ENCODE measurements at regions of chr10 and their contacts with region 1.

Region 1: GRCh38 chr10:100518761-100519241 is 860 bp downstream of the SEC31B start:
- DNase-seq: peak in 1 of 2 donors; percentile 81
- H3K4me3 ChIP-seq: peak overlapping the region; percentile 48 to 73
- H3K27ac ChIP-seq: peak overlapping the region in 1 of 2 donors; percentile 13
- H3K4me1 ChIP-seq: no peaks in the 10 kb centered on the region
- H3K27me3 ChIP-seq: no peaks in the 10 kb centered on the region
- CTCF ChIP-seq: peak; percentile 36 to 73 (median 59)

Region 2: DNA sequence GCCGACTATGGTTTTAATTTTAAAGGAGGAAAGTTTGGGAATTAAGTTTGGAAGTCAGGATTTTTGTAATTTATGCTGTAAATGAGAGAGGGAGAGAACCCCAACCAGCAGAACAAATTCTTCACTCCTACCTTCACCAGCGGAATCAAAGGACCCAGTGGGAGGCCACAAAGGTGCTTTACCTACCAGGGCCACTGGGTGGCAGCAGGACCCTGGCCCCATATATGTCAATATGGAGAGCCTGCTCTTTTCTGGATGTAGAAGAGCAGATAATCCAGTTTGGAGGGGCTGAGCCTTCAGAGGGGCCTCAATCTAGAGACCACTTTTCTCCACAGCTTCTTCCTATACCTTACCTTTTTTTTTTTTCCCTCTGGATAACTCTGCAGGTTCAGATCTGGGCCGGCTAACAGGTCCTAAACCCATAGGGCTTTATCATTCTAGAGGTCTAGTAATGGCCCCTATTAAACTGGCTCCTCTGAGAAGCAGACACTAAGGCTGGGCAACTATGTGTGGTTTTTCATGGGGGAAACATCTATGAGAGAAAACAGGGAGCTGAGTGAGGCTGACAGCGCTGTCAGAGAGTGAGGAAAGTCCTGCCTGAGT is 180.3 kb before region 1 on chr10:
- intact Hi-C with region 1: loop called (anchors 2 kb)
- DNase-seq: peak; percentile 36 to 85
- H3K4me3 ChIP-seq: no peak overlapping the region
- H3K27ac ChIP-seq: no peak overlapping the region
- H3K4me1 ChIP-seq: no peaks in the 10 kb centered on the region
- H3K27me3 ChIP-seq: no peaks in the 10 kb centered on the region
- CTCF ChIP-seq: peak; percentile 87 to 91 (median 90)

Region 3: DNA sequence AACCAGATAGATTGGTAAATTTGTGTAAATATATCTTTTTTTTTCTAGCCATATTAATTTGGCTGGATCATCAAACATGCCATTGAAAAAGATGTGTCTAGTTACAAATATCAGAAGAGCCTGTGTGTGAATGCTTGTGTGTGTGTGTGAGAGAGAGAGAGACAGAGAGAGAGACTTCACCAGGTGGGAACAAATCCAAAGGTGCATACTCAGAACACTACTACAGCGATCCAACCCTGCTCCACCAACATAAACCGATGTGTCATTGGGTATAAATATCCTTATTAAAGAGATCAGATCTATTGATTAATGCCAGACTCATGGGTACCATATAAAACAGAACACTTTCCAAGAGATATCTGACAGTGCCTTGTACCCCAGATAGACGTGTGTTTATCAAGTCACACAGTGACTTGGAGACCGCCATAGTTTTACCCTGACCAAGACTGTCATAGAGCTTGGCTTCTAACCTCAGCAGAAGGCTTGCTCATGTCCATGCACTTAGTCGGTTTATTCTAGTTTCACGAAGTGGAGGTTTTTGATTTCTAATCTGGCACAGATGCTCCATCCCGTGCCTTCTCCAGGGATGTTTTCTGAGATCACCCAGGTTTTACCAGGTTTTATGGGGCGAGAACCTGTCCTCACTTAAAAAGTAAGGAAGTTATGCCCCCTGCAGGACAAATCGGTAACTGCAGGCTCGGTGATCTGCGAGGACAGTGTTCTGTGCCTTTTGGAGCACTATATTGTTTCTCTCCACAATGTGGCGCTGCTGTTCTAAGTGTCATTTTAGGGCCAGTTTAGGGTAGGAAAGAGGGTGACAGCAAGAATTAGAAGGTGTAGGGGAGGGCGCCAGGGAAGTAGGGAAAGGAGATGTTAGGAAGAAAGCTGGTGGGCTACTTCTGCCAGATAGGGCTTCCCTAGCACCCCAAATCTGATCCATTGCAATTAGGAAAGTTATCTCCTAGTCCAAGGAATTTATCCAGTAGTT is 85.3 kb before region 1 on chr10:
- intact Hi-C with region 1: loop called (anchors 5 kb)
- DNase-seq: peak; percentile 63 to 97
- H3K4me3 ChIP-seq: no peak overlapping the region
- H3K27ac ChIP-seq: no peak overlapping the region
- H3K4me1 ChIP-seq: no peaks in the 10 kb centered on the region
- H3K27me3 ChIP-seq: no peaks in the 10 kb centered on the region
- CTCF ChIP-seq: peak; percentile 98 to 100 (median 98)

Region 4: DNA sequence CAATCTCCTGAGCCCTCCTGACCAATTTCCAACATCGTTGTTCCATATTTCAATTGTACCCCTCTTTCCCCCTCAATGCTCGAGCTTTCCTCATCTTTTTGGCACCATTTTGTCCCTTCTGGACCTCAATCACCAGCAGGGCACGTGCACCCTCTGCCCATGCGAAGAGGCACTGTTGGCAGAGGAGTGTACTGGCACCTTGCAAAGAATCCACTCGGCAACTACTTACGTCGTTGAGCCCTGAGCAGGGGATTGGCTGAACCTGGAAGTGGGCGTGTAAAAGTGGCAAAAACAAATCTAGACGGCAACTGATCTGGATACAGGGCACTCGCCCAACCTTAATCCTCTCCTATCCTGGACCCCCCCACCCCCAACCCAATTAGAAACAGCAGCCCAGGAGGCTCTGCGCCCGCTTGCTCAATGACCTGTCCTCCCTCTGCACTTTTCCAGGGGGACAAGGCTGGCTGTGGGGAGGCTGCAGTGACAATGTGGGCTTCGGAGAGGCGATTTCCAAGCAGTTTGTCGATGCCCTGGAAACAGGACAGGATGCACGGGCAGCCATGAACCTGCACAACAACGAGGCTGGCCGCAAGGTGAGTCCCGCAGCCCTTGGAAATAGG is 37.2 kb before region 1 on chr10:
- intact Hi-C with region 1: loop called (anchors 2 kb)
- DNase-seq: peak; percentile 64 to 94
- H3K4me3 ChIP-seq: peak overlapping the region; percentile 55 to 78
- H3K27ac ChIP-seq: no peak overlapping the region
- H3K4me1 ChIP-seq: peaks cover 0 to 13% of the 10 kb centered on the region in 2 donors
- H3K27me3 ChIP-seq: no peaks in the 10 kb centered on the region
- CTCF ChIP-seq: no peak